ENCODE measurements at regions of chr13 and their contacts with region 1.

Region 1: GRCh38 chr13:41492404-41493260 is 35.3 kb downstream of the RGCC start:
- DNase-seq: no peak
- ATAC-seq: peak in 1 of 4 donors; percentile 9
- H3K4me3 ChIP-seq: no peak overlapping the region
- H3K27ac ChIP-seq: peak overlapping the region in 10 of 12 donors; percentile 16 to 86 (median 48)
- H3K4me1 ChIP-seq: peaks cover 5 to 54% (median 36%) of the 10 kb centered on the region in 12 donors
- H3K27me3 ChIP-seq: no peaks in the 10 kb centered on the region
- CTCF ChIP-seq: no peak
- POLR2A ChIP-seq: no peak

Region 2: DNA sequence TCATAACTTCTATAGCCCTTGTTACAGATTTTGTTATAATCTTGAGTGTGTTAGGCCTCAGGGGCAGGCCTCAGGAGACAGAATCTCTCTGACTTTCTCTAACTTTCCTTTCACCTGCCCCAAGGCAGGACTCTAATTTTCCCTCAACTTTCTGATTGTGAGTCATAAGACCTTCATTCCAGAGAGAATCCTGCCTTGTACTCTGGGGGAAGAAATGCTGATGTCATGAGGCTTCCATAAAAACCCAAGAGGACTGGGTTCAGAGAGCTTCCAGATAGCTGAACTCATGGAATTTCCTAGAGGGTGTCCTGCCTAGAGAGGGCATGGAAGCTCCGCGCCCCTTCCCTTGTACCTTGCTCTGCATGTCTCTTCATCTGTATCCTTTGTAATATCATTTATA is 354.7 kb before region 1 on chr13:
- intact Hi-C with region 1: no loop called
- DNase-seq: no peak
- ATAC-seq: no peak
- H3K4me3 ChIP-seq: no peak overlapping the region
- H3K27ac ChIP-seq: no peak overlapping the region
- H3K4me1 ChIP-seq: peaks cover 0 to 9% (median 6%) of the 10 kb centered on the region in 12 donors
- H3K27me3 ChIP-seq: no peaks in the 10 kb centered on the region
- CTCF ChIP-seq: no peak
- POLR2A ChIP-seq: no peak

Region 3: GRCh38 chr13:41370736-41371135 is 121.9 kb before region 1 on chr13:
- intact Hi-C with region 1: no loop called
- DNase-seq: no peak
- ATAC-seq: no peak
- H3K4me3 ChIP-seq: no peak overlapping the region
- H3K27ac ChIP-seq: no peak overlapping the region
- H3K4me1 ChIP-seq: no peaks in the 10 kb centered on the region
- H3K27me3 ChIP-seq: no peaks in the 10 kb centered on the region
- CTCF ChIP-seq: no peak
- POLR2A ChIP-seq: no peak

Region 4: GRCh38 chr13:41456768-41457588 is 35.7 kb before region 1 on chr13 and contains the start of gene RGCC:
- intact Hi-C with region 1: loop called in 1 of 10 experiments (anchors 5 kb)
- DNase-seq: peak; percentile 77 to 91 (median 83)
- ATAC-seq: peak; percentile 70 to 93 (median 88)
- H3K4me3 ChIP-seq: peak within 1 kb of the TSS; percentile 67 to 92 (median 76)
- H3K27ac ChIP-seq: peak within 1 kb of the TSS; percentile 73 to 93 (median 85)
- H3K4me1 ChIP-seq: peaks cover 0 to 41% (median 7%) of the 10 kb centered on the region in 12 donors
- H3K27me3 ChIP-seq: peaks cover 0 to 20% (median 8%) of the 10 kb centered on the region in 9 donors
- CTCF ChIP-seq: no peak
- POLR2A ChIP-seq: peak in 1 of 2 donors; percentile 95
- total RNA-seq, gene RGCC: 22.9 to 228 (median 45.9) TPM

Region 5: GRCh38 chr13:41465241-41465847 is 27.3 kb before region 1 on chr13:
- intact Hi-C with region 1: loop called in 1 of 10 experiments (anchors 2 kb)
- DNase-seq: peak; percentile 67 to 83 (median 71)
- ATAC-seq: peak; percentile 63 to 89 (median 80)
- H3K4me3 ChIP-seq: no peak overlapping the region
- H3K27ac ChIP-seq: peak overlapping the region; percentile 8 to 90 (median 71)
- H3K4me1 ChIP-seq: peaks cover 0 to 64% (median 25%) of the 10 kb centered on the region in 12 donors
- H3K27me3 ChIP-seq: no peaks in the 10 kb centered on the region
- CTCF ChIP-seq: no peak
- POLR2A ChIP-seq: no peak

Region 6: DNA sequence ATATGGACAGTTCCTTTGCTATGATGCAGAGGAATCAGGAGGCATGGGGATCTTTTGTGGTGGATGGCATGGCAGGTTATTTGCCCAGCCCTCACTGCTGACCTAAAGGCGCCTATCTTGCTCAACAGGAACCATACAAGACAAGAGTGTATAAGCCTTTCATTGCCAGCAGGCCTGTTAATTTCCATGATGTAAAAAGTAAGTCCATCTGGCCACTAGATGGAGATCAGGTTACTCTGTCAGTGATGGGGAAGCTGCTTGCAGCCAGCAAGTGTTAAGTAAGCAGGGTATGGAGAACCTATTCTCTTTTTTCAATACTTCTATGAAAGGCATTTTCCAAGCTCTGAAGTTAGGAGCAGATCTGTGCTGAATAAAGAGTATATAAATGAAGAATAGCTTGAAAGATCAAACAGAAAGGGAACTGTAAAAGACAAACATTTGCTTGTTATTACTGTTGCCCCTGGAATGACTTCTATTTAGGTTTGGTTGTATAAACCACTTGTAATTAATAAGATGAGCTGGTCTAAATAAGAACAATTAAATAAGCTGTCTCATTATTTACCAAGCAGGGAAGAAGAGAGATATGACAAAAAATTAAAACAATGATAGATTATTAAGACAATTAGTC is 175.6 kb after region 1 on chr13:
- intact Hi-C with region 1: no loop called
- DNase-seq: peak in 4 of 5 donors; percentile 44 to 66 (median 56)
- ATAC-seq: peak; percentile 57 to 98 (median 96)
- H3K4me3 ChIP-seq: no peak overlapping the region
- H3K27ac ChIP-seq: no peak overlapping the region
- H3K4me1 ChIP-seq: peaks cover 0 to 7% (median 1%) of the 10 kb centered on the region in 12 donors
- H3K27me3 ChIP-seq: no peaks in the 10 kb centered on the region
- CTCF ChIP-seq: peak; percentile 64 to 85 (median 79)
- POLR2A ChIP-seq: no peak

Measured in heart left ventricle (tissue), 16 donors.